AG04450 (cell line): ENCODE measurements at regions of chr4 and their contacts with region 1.

Region 1: GRCh38 chr4:5812506-5813229 is 80.2 kb downstream of the CRMP1 start:
- DNase-seq: peak; percentile 42
- H3K4me3 ChIP-seq: no peak overlapping the region
- H3K27ac ChIP-seq: no peak overlapping the region
- H3K27me3 ChIP-seq: no peaks in the 10 kb centered on the region
- CTCF ChIP-seq: peak; percentile 85

Region 2: DNA sequence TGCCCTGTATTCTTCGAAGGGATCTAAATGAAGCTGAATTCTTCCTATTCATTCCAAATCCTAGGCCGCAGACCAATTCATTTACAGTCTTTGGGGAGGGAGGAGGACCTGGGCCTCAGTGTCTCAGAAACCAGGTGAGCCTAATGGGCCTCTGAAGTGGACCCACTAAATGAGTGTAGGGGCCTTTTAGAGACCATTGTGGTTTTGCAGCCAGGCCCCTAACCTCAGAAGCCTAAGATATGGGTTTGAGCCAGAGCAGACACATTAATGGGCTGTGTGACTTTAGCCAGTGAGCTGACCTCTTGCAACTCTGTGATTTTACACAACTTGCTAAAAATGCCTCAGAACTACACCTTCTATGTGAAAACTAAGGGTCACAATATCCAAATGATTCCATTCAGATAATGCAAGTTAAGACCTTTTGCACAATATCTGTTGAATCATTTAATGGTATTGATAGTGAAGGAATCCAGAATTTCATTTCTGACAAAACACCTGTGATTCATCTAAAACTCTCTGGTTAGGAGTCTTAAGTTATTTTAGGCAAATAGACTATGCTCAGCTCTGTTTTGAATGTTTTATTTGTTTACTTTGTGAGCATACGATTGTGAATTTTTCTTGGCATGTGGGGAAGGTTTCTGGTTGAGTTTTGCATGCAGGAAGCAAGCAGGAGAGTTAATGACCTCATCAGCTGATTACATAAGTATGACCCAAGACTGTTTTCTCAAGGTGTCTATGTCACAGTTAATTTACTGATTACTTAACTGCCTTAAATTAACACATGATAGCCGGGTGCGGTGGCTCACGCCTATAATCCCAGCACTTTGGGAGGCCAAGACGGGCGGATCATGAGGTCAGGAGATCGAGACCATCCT is 26.6 kb before region 1 on chr4:
- CTCF ChIA-PET with region 1: no interaction called
- POLR2A ChIA-PET with region 1: no interaction called
- DNase-seq: peak; percentile 54
- H3K4me3 ChIP-seq: no peak overlapping the region
- H3K27ac ChIP-seq: peak overlapping the region; percentile 60
- H3K27me3 ChIP-seq: no peaks in the 10 kb centered on the region
- CTCF ChIP-seq: no peak

Region 3: DNA sequence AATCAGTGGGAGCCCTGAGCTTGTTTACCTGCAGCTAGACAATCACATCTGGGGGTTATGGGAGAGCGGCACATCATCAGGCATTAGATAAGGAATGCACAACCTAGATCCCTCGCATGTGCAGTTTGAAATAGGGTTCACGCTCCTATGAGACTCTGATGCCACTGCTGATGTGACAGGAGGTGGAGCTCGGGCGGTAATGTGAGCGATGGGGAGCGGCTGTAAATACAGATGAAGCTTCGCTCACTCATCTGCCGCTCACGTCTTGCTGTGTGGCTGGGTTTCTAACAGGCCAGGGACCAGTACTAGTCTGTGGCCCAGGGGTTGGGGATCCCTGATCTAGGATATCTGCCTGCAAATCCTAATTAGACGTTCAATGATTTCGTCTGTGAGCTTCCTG is 10.1 kb before region 1 on chr4:
- CTCF ChIA-PET with region 1: interaction called, 12 read pairs
- POLR2A ChIA-PET with region 1: no interaction called
- DNase-seq: no peak
- H3K4me3 ChIP-seq: no peak overlapping the region
- H3K27ac ChIP-seq: no peak overlapping the region
- H3K27me3 ChIP-seq: no peaks in the 10 kb centered on the region
- CTCF ChIP-seq: no peak

Region 4: DNA sequence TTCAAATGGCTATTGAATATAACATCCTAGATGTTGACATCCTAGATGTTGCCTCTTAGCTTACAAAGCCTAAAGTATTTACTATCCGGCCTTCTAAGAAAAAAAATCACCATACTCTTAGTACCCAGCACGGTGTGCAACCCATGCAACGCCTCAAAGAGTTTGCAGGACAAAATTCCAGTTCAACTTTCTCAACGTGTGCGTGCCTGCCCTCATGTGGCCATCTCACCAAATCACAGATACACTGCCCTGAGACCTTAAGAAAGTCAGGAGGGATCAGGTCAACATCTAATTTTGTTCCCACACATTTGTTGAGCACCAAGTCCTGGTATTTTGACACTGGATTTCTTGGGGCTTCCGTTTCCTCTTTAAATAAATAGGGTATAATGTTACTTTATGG is 12.0 kb after region 1 on chr4:
- CTCF ChIA-PET with region 1: interaction called, 13 read pairs
- POLR2A ChIA-PET with region 1: no interaction called
- DNase-seq: no peak
- H3K4me3 ChIP-seq: no peak overlapping the region
- H3K27ac ChIP-seq: no peak overlapping the region
- H3K27me3 ChIP-seq: no peaks in the 10 kb centered on the region
- CTCF ChIP-seq: peak; percentile 67